MCF 10A (cell line): ENCODE measurements at regions of chr3 and their contacts with region 1.

Region 1: GRCh38 chr3:185824476-185825378 is at the start of gene IGF2BP2:
- DNase-seq: peak; percentile 78
- H3K4me3 Mint-ChIP-seq: peak within 1 kb of the TSS; percentile 96
- H3K27ac Mint-ChIP-seq: peak within 1 kb of the TSS; percentile 99
- H3K4me1 Mint-ChIP-seq: peaks cover 23% of the 10 kb centered on the region
- H3K27me3 Mint-ChIP-seq: no peaks in the 10 kb centered on the region
- CTCF ChIP-seq: no peak
- total RNA-seq, gene IGF2BP2: 108 and 154 TPM in 2 replicates

Region 2: DNA sequence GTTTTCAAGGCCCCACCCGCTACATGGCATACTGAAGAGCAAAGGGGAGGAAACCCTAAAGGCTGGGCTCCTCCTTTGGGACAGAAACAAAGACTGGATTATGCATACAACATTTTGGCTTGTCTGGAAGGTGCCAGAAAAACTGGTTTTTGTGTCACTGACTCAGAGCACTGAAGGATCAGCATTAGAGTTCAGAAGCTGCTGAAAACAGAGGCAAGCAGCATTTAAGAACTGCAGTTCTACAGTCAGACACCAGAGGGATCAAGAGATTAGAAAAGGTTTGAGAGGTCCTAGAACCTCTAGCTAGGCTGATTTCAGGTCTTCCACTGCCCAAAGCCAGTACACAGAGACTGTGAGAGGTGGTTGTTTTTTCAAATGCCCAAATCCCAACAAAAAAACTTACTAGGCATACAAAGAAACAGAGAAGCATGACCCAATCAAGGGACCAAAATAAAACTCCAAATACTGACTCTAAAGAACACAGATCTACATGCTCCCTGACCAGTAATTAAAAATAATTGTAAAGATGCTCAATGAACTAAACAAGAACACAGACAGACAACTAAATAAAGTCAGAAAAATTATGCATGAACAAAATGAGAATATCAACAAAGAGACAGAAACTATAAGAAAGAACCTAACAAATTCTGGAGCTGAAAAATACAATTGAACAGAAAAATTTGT is 147.4 kb before region 1 on chr3:
- CTCF ChIA-PET with region 1: no interaction called
- POLR2A ChIA-PET with region 1: interaction called, 8 read pairs
- intact Hi-C with region 1: loop called (anchors 2 kb)
- DNase-seq: peak; percentile 79
- H3K4me3 Mint-ChIP-seq: no peak overlapping the region
- H3K27ac Mint-ChIP-seq: peak overlapping the region; percentile 63
- H3K4me1 Mint-ChIP-seq: peaks cover 8% of the 10 kb centered on the region
- H3K27me3 Mint-ChIP-seq: no peaks in the 10 kb centered on the region
- CTCF ChIP-seq: peak; percentile 70

Region 3: DNA sequence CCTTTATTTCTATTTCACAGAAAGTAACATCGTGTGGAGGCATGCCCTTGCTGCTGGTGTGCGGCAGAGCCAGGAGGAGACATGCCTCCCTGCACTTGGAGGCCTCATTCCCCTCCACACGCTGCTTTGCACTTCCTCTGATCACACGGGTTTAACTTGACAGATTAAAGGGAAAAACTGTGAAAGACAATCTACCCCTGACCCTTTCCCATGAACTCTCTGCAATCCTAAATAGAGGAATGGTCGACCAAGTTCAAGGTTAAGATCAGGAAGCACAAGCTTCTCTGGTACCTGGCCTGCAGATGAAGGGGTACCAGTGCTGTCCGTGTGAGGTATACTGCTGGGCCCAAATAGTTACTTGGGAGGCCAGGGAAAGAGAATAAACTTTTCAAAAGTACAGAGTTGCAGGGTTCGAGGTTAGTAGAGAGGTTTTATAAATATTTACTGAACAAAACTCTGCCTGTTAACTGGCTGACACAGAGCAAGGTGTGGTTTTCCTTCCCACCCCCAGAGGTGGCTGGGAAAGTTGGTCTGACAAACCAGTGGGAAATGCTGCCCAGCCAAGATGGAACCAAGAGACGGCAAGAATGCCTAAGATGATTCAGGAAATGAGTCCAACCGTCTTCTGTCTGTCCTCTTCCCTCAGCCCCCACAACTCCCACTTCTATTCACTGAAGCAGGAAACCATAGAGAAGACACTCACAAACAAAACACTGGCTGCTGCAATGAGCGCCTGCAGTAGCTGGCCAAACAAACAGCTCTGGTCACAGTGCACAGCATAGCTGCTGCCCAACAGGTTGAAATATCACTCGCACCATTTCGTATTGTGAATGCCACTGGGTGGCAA is 79.5 kb before region 1 on chr3:
- CTCF ChIA-PET with region 1: no interaction called
- POLR2A ChIA-PET with region 1: interaction called, 10 read pairs
- intact Hi-C with region 1: no loop called
- DNase-seq: peak; percentile 57
- H3K4me3 Mint-ChIP-seq: no peak overlapping the region
- H3K27ac Mint-ChIP-seq: no peak overlapping the region
- H3K4me1 Mint-ChIP-seq: peaks cover 19% of the 10 kb centered on the region
- H3K27me3 Mint-ChIP-seq: no peaks in the 10 kb centered on the region
- CTCF ChIP-seq: no peak

Region 4: GRCh38 chr3:185796431-185797107 is 28.2 kb before region 1 on chr3:
- CTCF ChIA-PET with region 1: interaction called, 4 read pairs
- POLR2A ChIA-PET with region 1: interaction called, 60 read pairs
- intact Hi-C with region 1: loop called (anchors 1 kb)
- DNase-seq: peak; percentile 95
- H3K4me3 Mint-ChIP-seq: peak overlapping the region; percentile 12
- H3K27ac Mint-ChIP-seq: peak overlapping the region; percentile 91
- H3K4me1 Mint-ChIP-seq: peaks cover 34% of the 10 kb centered on the region
- H3K27me3 Mint-ChIP-seq: no peaks in the 10 kb centered on the region
- CTCF ChIP-seq: no peak

Region 5: GRCh38 chr3:185900226-185900625 is 75.5 kb after region 1 on chr3:
- CTCF ChIA-PET with region 1: interaction called, 3 read pairs
- POLR2A ChIA-PET with region 1: interaction called, 21 read pairs
- intact Hi-C with region 1: no loop called
- DNase-seq: peak; percentile 98
- H3K4me3 Mint-ChIP-seq: no peak overlapping the region
- H3K27ac Mint-ChIP-seq: peak overlapping the region; percentile 59
- H3K4me1 Mint-ChIP-seq: peaks cover 10% of the 10 kb centered on the region
- H3K27me3 Mint-ChIP-seq: no peaks in the 10 kb centered on the region
- CTCF ChIP-seq: no peak

Region 6: DNA sequence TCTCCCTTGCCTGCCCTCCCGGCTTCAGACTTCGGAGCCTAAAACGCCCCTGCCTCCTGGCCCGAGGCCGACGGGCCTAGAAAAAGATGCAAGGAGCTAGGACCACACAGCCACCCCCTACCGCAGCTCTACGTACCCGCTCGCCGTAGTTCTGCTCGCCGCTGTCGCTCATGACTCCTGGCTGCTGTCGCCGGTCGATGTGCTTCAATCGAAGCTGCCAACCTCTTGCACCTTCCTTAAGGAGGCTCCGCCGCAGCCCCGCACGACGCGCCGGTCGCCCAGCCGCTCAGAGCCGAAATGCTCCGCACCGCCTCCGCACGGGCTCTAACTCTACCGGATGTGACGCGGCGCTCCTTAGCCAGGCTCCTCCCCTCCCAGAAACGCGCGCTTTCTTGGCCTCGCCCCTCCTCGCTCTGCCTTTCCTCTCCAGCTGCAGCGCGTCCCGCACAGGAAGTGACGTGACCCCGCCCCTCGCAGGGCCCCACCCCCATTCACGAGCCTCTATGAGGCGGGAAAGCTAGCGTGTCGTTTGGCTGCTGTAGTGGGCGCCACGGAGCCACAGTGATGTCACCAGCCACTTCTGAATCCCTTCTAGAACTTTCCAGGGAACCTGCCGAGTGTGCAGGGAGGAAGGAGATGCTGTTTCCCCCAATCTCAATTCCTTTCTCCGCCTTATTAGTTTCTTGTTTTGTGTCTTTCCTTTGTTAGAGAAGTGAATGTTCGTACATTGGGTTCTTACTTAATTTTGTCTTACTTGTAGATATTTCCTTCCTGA is 113.1 kb after region 1 on chr3 and contains the start of gene TRA2B:
- CTCF ChIA-PET with region 1: interaction called, 4 read pairs
- POLR2A ChIA-PET with region 1: interaction called, 154 read pairs
- intact Hi-C with region 1: loop called (anchors 2 kb)
- DNase-seq: peak; percentile 99
- H3K4me3 Mint-ChIP-seq: peak within 1 kb of the TSS; percentile 98
- H3K27ac Mint-ChIP-seq: peak within 1 kb of the TSS; percentile 100
- H3K4me1 Mint-ChIP-seq: peaks cover 17% of the 10 kb centered on the region
- H3K27me3 Mint-ChIP-seq: no peaks in the 10 kb centered on the region
- CTCF ChIP-seq: no peak
- total RNA-seq, gene TRA2B: 212 and 246 TPM in 2 replicates

Region 7: GRCh38 chr3:186083746-186084145 is 259.0 kb after region 1 on chr3:
- CTCF ChIA-PET with region 1: no interaction called
- POLR2A ChIA-PET with region 1: no interaction called
- intact Hi-C with region 1: no loop called
- DNase-seq: no peak
- H3K4me3 Mint-ChIP-seq: no peak overlapping the region
- H3K27ac Mint-ChIP-seq: no peak overlapping the region
- H3K4me1 Mint-ChIP-seq: no peaks in the 10 kb centered on the region
- H3K27me3 Mint-ChIP-seq: no peaks in the 10 kb centered on the region
- CTCF ChIP-seq: no peak